ENCODE measurements at regions of chr17 and their contacts with region 1.

Region 1: GRCh38 chr17:68205251-68205807 is 42.5 kb upstream of the AMZ2 start:
- DNase-seq: peak; percentile 88 to 94 (median 89)
- H3K4me3 ChIP-seq: peak overlapping the region in 1 of 2 donors; percentile 65
- H3K4me3 Mint-ChIP-seq: peak overlapping the region; percentile 79 to 93 (median 89)
- H3K27ac ChIP-seq: peak overlapping the region; percentile 72
- H3K27ac Mint-ChIP-seq: peak overlapping the region; percentile 74 to 94 (median 92)
- H3K4me1 ChIP-seq: peaks cover 43% of the 10 kb centered on the region
- H3K4me1 Mint-ChIP-seq: peaks cover 20 to 49% (median 33%) of the 10 kb centered on the region in 4 donors
- H3K27me3 ChIP-seq: no peaks in the 10 kb centered on the region
- H3K27me3 Mint-ChIP-seq: no peaks in the 10 kb centered on the region

Region 2: GRCh38 chr17:67959288-67959900 is 245.9 kb before region 1 on chr17:
- CTCF ChIA-PET with region 1: no interaction called
- POLR2A ChIA-PET with region 1: no interaction called
- intact Hi-C with region 1: no loop called
- DNase-seq: no peak
- H3K4me3 ChIP-seq: no peak overlapping the region
- H3K4me3 Mint-ChIP-seq: no peak overlapping the region
- H3K27ac ChIP-seq: no peak overlapping the region
- H3K27ac Mint-ChIP-seq: peak overlapping the region in 6 of 7 donors; percentile 1 to 90 (median 72)
- H3K4me1 ChIP-seq: no peaks in the 10 kb centered on the region
- H3K4me1 Mint-ChIP-seq: peaks cover 0 to 6% (median 3%) of the 10 kb centered on the region in 4 donors
- H3K27me3 ChIP-seq: no peaks in the 10 kb centered on the region
- H3K27me3 Mint-ChIP-seq: no peaks in the 10 kb centered on the region

Region 3: GRCh38 chr17:68057531-68057952 is 147.8 kb before region 1 on chr17:
- CTCF ChIA-PET with region 1: interaction called, 26 read pairs
- POLR2A ChIA-PET with region 1: interaction called, 6 read pairs
- intact Hi-C with region 1: no loop called
- DNase-seq: peak; percentile 43 to 63 (median 51)
- H3K4me3 ChIP-seq: no peak overlapping the region
- H3K4me3 Mint-ChIP-seq: no peak overlapping the region
- H3K27ac ChIP-seq: no peak overlapping the region
- H3K27ac Mint-ChIP-seq: no peak overlapping the region
- H3K4me1 ChIP-seq: peaks cover 5% of the 10 kb centered on the region
- H3K4me1 Mint-ChIP-seq: peaks cover 0 to 19% (median 4%) of the 10 kb centered on the region in 4 donors
- H3K27me3 ChIP-seq: no peaks in the 10 kb centered on the region
- H3K27me3 Mint-ChIP-seq: no peaks in the 10 kb centered on the region

Region 4: DNA sequence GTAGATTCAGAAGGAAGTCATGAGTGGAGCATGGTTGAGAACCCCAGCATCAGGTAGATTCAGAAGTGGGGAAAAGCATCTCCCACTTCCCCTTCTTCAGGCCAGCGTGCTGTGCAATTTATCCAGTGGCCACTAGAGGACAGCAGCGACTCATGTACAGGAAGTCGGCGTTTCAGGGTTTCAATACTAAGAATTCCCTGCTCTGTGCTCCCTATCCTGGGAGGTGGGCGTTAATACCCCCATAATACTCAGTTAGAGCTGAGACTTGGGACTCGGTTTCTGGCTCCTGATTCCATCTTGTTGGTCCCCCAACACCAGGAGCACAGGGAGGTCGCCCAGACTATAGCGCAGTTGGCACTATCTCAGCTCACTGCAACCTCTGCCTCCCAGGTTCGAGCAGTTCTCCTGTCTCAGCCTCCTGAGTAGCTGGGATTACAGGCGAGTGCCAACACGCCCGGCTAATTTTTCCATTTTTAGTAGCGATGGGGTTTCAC is 32.8 kb before region 1 on chr17:
- CTCF ChIA-PET with region 1: interaction called, 221 read pairs
- POLR2A ChIA-PET with region 1: interaction called, 49 read pairs
- intact Hi-C with region 1: loop called (anchors 1 kb)
- DNase-seq: peak; percentile 67 to 78 (median 68)
- H3K4me3 ChIP-seq: no peak overlapping the region
- H3K4me3 Mint-ChIP-seq: no peak overlapping the region
- H3K27ac ChIP-seq: no peak overlapping the region
- H3K27ac Mint-ChIP-seq: no peak overlapping the region
- H3K4me1 ChIP-seq: peaks cover 3% of the 10 kb centered on the region
- H3K4me1 Mint-ChIP-seq: peaks cover 8 to 17% (median 10%) of the 10 kb centered on the region in 4 donors
- H3K27me3 ChIP-seq: no peaks in the 10 kb centered on the region
- H3K27me3 Mint-ChIP-seq: no peaks in the 10 kb centered on the region

Region 5: GRCh38 chr17:68184816-68185436 is 20.4 kb before region 1 on chr17:
- CTCF ChIA-PET with region 1: interaction called, 270 read pairs
- POLR2A ChIA-PET with region 1: interaction called, 330 read pairs
- intact Hi-C with region 1: loop called (anchors 1 kb)
- DNase-seq: peak; percentile 69 to 84 (median 75)
- H3K4me3 ChIP-seq: peak overlapping the region; percentile 1 to 54
- H3K4me3 Mint-ChIP-seq: peak overlapping the region; percentile 78 to 100 (median 94)
- H3K27ac ChIP-seq: peak overlapping the region; percentile 80
- H3K27ac Mint-ChIP-seq: peak overlapping the region; percentile 90 to 96 (median 95)
- H3K4me1 ChIP-seq: peaks cover 73% of the 10 kb centered on the region
- H3K4me1 Mint-ChIP-seq: peaks cover 46 to 89% (median 65%) of the 10 kb centered on the region in 4 donors
- H3K27me3 ChIP-seq: no peaks in the 10 kb centered on the region
- H3K27me3 Mint-ChIP-seq: no peaks in the 10 kb centered on the region

Region 6: DNA sequence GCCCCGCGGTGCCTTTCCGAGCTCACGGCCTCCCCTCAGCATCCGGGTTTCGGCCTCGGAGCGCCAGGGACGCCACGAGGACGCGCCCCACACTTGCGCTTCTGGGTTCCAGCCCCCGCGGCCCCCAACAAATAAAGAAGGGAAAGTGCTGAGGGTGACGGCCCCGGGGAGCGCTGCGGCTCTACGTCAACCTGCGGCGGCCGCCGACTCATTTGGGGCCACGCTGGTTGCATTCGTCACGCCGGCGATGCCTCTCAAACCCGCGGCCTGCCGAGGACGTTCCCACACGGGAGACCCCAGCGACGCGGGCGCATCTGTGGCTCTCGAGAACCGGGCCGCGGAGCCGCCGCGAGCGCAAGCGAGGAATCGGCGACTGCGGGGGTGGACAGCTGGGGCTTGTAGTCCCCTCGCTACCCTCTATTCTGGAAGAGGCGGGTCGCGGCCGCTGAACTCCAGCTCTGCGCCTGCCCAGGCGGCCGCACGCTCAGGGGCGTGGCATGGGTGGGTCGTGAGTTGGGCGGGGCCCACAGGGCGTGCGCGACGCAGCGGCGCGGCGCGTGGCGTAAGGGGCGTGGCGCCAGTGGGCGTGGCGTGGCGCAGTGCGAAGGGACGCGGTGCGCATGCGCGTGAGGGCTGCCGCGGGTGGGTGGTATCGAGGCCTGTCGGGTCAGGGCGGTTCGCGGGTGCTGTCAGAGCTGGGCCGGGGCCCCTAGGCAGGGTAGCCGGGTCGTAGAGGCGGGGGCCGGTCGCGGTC is 42.3 kb after region 1 on chr17 and contains the start of gene AMZ2:
- CTCF ChIA-PET with region 1: interaction called, 10 read pairs
- POLR2A ChIA-PET with region 1: interaction called, 84 read pairs
- intact Hi-C with region 1: loop called (anchors 2 kb)
- DNase-seq: peak; percentile 94 to 99 (median 97)
- H3K4me3 ChIP-seq: peak within 1 kb of the TSS; percentile 76 to 95
- H3K4me3 Mint-ChIP-seq: peak within 1 kb of the TSS; percentile 85 to 94 (median 94)
- H3K27ac ChIP-seq: peak within 1 kb of the TSS; percentile 99
- H3K27ac Mint-ChIP-seq: peak within 1 kb of the TSS; percentile 97 to 99 (median 99)
- H3K4me1 ChIP-seq: peaks cover 37% of the 10 kb centered on the region
- H3K4me1 Mint-ChIP-seq: peaks cover 33 to 59% (median 37%) of the 10 kb centered on the region in 4 donors
- H3K27me3 ChIP-seq: no peaks in the 10 kb centered on the region
- H3K27me3 Mint-ChIP-seq: no peaks in the 10 kb centered on the region
- total RNA-seq, gene AMZ2: 66.1 to 81.2 TPM

Measured in CD4-positive, alpha-beta memory T cell (primary cell).